ENCODE measurements at regions of chr2 and their contacts with region 1.

Region 1: DNA sequence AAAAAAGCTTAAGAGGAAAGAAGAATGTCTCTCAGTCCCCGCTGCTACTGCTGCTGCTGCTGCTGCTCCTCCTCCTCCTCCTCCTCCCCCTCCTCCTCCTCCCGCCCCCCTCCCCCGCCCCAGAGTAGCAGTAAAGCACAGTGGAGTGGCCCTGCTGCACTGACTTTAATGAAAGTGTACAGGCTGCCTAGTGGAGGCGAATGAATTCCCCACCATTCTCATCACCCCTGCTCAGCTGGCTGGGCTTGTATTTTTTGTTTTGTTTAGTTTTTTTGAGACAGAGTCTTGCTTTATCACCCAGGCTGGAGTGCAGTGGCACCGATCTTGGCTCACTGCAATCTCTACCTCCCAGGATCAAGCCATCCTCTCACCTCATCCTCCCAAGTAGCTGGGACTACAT is 34.3 kb downstream of the GORASP2 start:
- DNase-seq: no peak
- ATAC-seq: no peak
- H3K4me3 ChIP-seq: no peak overlapping the region
- H3K27ac ChIP-seq: no peak overlapping the region
- H3K4me1 ChIP-seq: peaks cover 0 to 6% (median 0%) of the 10 kb centered on the region in 9 donors
- H3K27me3 ChIP-seq: no peaks in the 10 kb centered on the region
- CTCF ChIP-seq: no peak

Region 2: GRCh38 chr2:170922634-170923494 is 40.5 kb before region 1 on chr2:
- intact Hi-C with region 1: no loop called
- DNase-seq: no peak
- ATAC-seq: no peak
- H3K4me3 ChIP-seq: no peak overlapping the region
- H3K27ac ChIP-seq: no peak overlapping the region
- H3K4me1 ChIP-seq: peaks cover 0 to 1% (median 0%) of the 10 kb centered on the region in 9 donors
- H3K27me3 ChIP-seq: no peaks in the 10 kb centered on the region
- CTCF ChIP-seq: no peak

Region 3: GRCh38 chr2:171146633-171147032 is 183.2 kb after region 1 on chr2:
- intact Hi-C with region 1: loop called in 1 of 10 experiments (anchors 5 kb)
- DNase-seq: no peak
- ATAC-seq: peak in 1 of 8 donors; percentile 52
- H3K4me3 ChIP-seq: no peak overlapping the region
- H3K27ac ChIP-seq: peak overlapping the region in 5 of 10 donors; percentile 12 to 49 (median 20)
- H3K4me1 ChIP-seq: peaks cover 0 to 53% (median 21%) of the 10 kb centered on the region in 9 donors
- H3K27me3 ChIP-seq: no peaks in the 10 kb centered on the region
- CTCF ChIP-seq: no peak

Measured in heart right ventricle (tissue), 16 donors.